ENCODE measurements at regions of chr1 and their contacts with region 1.

Region 1: DNA sequence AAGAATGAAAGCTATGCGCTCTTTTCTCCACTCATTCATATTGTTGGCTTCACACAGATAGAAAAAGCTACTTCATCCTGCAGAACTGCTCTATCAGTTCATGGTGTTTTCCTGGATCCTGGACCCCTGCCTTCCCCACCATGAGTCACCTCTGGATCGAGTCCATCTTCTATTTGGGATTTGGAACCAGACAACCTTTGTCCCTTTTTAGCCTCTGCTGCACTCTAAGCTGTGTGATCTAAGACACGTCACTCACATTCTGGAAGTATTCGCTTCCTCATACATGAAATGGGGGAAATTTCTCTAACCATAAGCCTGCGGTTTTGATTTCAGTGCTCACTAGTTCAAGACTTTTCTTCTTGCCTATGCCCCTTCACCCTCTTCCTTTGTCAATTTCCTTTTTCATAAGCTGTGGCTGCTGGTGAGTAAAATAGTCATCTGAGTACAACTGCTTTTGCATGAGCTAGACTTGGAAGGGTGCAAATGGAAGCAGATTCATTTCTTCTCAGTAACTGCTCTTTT is 14.1 kb upstream of the DEGS1 start:
- DNase-seq: peak; percentile 87
- H3K4me3 Mint-ChIP-seq: peak overlapping the region; percentile 68
- H3K27ac Mint-ChIP-seq: peak overlapping the region; percentile 90
- H3K4me1 Mint-ChIP-seq: peaks cover 37% of the 10 kb centered on the region
- H3K27me3 Mint-ChIP-seq: peaks cover 3% of the 10 kb centered on the region

Region 2: GRCh38 chr1:223811634-223812415 is 357.1 kb before region 1 on chr1:
- intact Hi-C with region 1: no loop called
- DNase-seq: peak; percentile 69
- H3K4me3 Mint-ChIP-seq: no peak overlapping the region
- H3K27ac Mint-ChIP-seq: no peak overlapping the region
- H3K4me1 Mint-ChIP-seq: peaks cover 22% of the 10 kb centered on the region
- H3K27me3 Mint-ChIP-seq: no peaks in the 10 kb centered on the region

Region 3: DNA sequence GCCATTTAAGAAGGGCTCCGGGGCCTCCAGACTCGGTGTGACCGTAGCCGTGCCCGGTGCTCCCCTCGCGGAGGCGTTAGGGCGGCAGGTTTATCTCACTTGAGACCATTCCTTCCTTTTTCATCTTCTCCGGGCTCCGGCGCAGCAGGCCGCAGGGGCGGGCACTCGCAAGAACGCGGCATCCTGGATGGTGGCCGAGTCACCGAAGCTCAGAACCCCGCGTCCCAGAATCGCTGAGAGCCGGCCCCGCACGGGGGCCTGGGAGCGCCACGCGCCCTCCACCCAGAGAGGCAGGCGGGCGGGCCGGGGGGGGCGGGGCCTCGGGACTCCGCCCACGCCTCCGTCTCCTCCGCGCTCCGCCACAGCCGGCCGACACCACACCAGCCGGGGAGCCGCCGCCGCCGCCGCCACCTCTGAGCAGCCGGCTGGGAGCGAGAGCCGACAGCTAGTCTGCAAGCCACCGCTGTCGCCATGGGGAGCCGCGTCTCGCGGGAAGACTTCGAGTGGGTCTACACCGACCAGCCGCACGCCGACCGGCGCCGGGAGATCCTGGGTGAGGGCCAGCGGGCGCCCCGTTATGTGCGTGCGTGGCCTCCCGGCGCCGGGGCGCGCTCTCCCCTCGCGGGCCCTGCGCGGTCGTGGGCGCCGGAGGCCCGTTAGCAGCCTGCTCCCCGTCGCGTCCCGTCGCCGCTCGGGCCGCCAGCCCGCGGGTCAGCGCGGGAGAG is 14.1 kb after region 1 on chr1 and contains the start of gene DEGS1:
- intact Hi-C with region 1: loop called (anchors 1 kb)
- DNase-seq: peak; percentile 95
- H3K4me3 Mint-ChIP-seq: peak within 1 kb of the TSS; percentile 96
- H3K27ac Mint-ChIP-seq: peak within 1 kb of the TSS; percentile 97
- H3K4me1 Mint-ChIP-seq: peaks cover 45% of the 10 kb centered on the region
- H3K27me3 Mint-ChIP-seq: peaks cover 3% of the 10 kb centered on the region
- total RNA-seq, gene DEGS1: 51.8 and 56.3 TPM in 2 replicates

Region 4: DNA sequence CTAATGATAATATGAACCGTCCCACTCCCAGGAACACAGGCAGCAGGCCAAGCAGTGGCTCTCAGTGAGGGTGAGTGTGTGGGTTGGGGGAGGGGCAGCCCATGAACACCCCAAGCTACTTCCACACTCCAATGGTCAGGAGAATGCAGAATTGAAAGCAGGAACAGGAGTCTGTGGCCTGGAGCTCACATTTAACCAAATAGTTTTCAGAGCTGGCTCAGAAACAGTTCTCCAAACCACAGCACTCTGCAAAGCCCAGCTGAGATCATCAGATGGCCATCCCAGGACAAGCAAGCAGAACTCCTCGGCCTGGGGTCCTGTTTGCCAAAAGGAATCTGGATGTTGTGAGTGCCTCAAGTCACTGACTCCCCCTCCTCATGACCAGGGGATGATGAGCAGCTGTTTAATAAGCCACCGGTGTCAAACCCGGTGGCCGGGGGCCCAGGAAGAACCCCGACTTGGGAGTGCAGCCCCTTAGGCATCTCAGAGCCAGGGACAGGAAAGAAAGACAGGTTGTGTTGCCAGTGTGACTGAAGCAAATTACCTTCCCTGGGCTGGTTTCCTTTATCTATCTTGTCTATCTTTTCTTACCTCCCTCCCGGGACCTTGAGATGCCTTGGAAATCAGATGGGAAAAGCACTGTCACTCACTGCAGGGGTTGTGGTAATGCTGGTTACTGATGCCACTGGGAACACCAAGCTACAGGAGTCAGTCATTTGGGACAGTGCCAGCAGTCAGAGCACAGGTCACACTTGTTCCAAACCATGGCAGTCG is 34.5 kb after region 1 on chr1:
- intact Hi-C with region 1: loop called (anchors 5 kb)
- DNase-seq: no peak
- H3K4me3 Mint-ChIP-seq: peak overlapping the region; percentile 5
- H3K27ac Mint-ChIP-seq: no peak overlapping the region
- H3K4me1 Mint-ChIP-seq: peaks cover 13% of the 10 kb centered on the region
- H3K27me3 Mint-ChIP-seq: no peaks in the 10 kb centered on the region

Region 5: GRCh38 chr1:225710804-225711203 is 1541.9 kb after region 1 on chr1:
- intact Hi-C with region 1: no loop called
- DNase-seq: no peak
- H3K4me3 Mint-ChIP-seq: no peak overlapping the region
- H3K27ac Mint-ChIP-seq: no peak overlapping the region
- H3K4me1 Mint-ChIP-seq: no peaks in the 10 kb centered on the region
- H3K27me3 Mint-ChIP-seq: no peaks in the 10 kb centered on the region